Common myeloid progenitor, CD34-positive (primary cell): ENCODE measurements at regions of chr17 and their contacts with region 1.

Region 1: DNA sequence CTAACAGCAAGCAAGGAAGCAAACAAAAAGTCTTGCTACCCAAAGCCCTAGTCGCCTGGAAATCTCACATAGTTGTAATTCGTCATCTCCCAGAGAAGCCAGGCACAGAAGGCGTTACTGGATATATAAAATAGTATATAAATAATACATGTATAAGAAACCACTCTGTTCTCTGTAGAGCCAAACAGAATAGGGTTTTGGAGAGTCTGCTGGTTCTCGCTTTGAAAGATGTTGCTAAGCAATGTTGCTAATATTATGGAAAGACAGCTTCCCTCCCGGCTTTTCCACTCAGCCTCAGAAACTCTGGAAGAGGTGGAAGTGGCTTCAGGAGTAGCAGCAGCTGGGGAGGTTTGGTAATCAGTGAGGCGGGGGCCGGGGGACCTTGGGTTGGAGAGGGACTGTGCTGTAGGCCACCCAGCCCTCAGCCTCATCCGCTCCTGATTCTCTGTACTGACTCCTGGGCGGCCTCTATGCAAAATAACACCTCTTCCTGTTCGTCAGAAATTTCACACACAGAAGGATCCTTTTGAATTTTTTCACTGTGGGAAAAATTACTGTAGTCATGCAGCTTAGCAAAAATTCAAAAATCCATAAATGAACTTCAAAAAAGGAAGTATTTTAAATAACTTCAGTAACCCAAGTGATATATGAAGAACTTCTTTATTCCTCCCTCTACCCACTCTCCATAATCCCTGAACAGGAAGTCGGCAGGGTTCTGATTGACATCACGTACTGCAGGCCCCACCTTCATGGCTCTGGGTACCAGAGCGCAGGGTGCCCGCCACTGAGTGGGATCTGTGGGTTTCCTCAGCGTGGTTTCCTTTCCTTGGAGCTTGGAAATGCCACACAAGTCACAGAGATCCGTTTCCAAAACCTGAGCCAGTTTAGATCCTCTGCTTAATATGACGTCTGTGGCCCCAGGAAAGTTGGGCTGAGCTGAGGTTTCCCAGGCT is 51.4 kb downstream of the RAP1GAP2 start:
- DNase-seq: peak; percentile 57 to 79 (median 73)
- H3K4me3 ChIP-seq: peak overlapping the region in 2 of 7 experiments; percentile 25 to 30
- H3K27ac ChIP-seq: no peak overlapping the region
- H3K4me1 ChIP-seq: peaks cover 2 to 43% (median 37%) of the 10 kb centered on the region in 4 experiments
- H3K27me3 ChIP-seq: no peaks in the 10 kb centered on the region

Region 2: GRCh38 chr17:2701996-2702741 is 145.5 kb before region 1 on chr17:
- CTCF ChIA-PET with region 1: no interaction called
- POLR2A ChIA-PET with region 1: no interaction called
- DNase-seq: no peak
- H3K4me3 ChIP-seq: no peak overlapping the region
- H3K27ac ChIP-seq: no peak overlapping the region
- H3K4me1 ChIP-seq: no peaks in the 10 kb centered on the region
- H3K27me3 ChIP-seq: no peaks in the 10 kb centered on the region

Region 3: DNA sequence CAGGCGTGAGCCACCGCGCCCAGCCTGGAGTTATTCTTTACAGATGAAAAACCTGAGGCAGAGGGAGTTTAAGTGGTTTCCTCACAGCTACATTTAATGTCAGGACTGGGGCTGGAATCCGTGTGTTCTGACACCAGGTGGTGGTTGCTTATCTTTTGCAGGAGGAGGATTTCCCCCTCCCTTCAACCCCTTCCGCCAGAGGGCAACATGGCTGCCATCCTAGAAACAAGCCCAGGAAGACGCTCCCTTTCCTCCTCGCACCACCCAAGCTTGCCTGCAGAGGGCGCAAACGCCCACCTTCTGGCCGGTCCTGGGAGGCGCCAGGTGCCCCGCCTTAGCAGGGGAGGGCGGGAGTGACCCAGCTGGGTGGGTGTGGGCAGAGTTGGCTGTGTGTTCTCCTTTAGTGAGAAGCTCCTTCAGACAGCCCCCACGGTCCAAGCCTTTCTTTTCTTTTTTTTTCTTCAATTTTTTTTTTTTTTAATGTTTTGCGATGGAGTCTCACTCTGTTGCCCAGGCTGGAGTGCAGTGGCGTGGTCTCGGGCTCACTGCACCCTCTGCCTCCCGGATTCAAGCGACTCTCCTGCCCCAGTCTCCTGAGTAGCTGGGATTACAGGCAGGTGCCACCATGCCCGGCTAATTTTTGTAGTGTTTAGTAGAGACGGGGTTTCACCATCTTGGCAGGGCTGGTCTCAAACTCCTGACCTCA is 61.3 kb before region 1 on chr17:
- CTCF ChIA-PET with region 1: interaction called, 14 read pairs
- POLR2A ChIA-PET with region 1: no interaction called
- DNase-seq: peak; percentile 95 to 96 (median 96)
- H3K4me3 ChIP-seq: peak overlapping the region in 1 of 7 experiments; percentile 41
- H3K27ac ChIP-seq: no peak overlapping the region
- H3K4me1 ChIP-seq: peaks cover 2 to 66% (median 40%) of the 10 kb centered on the region in 4 experiments
- H3K27me3 ChIP-seq: no peaks in the 10 kb centered on the region

Region 4: GRCh38 chr17:2837147-2837561 is 10.5 kb before region 1 on chr17:
- CTCF ChIA-PET with region 1: interaction called, 24 read pairs
- POLR2A ChIA-PET with region 1: interaction called, 3 read pairs
- DNase-seq: peak in 2 of 3 donors; percentile 53 to 54
- H3K4me3 ChIP-seq: no peak overlapping the region
- H3K27ac ChIP-seq: no peak overlapping the region
- H3K4me1 ChIP-seq: peaks cover 0 to 10% (median 1%) of the 10 kb centered on the region in 4 experiments
- H3K27me3 ChIP-seq: no peaks in the 10 kb centered on the region

Region 5: DNA sequence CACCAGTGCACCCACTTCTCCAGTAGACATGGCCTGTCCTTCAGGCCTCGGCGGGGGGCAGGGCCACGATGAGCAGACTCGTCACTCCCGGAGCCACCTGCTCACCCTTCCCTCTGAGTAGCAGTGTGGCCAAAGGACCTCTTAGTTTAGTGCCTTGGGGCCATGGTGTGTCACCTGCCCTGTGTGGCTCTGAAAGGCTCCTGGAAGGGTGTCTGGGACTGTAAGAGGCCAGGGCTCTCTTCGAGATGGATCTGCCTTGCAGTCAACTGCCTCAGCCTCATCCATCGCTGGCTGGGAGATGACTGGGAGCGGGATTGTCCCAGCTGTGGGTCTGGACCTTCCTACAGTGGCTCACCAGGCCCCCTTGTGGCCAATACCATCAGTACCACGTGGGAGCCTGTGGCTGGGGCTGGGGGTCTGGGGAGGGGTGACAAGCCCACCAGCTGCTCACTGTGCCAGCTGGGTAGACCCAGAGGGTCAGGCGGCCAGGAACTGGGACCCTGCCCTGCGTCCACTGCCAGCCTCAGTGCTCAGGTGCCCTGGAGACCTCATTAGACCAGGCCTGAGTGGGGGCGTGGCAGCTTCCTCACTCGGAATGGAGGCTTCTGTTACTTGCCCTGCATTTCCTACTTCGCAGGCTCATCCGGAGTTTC is 82.3 kb after region 1 on chr17:
- CTCF ChIA-PET with region 1: interaction called, 23 read pairs
- POLR2A ChIA-PET with region 1: no interaction called
- DNase-seq: peak; percentile 21 to 35 (median 21)
- H3K4me3 ChIP-seq: no peak overlapping the region
- H3K27ac ChIP-seq: no peak overlapping the region
- H3K4me1 ChIP-seq: peaks cover 0 to 27% (median 15%) of the 10 kb centered on the region in 4 experiments
- H3K27me3 ChIP-seq: no peaks in the 10 kb centered on the region

Region 6: GRCh38 chr17:3012926-3013581 is 165.4 kb after region 1 on chr17:
- CTCF ChIA-PET with region 1: interaction called, 34 read pairs
- POLR2A ChIA-PET with region 1: no interaction called
- DNase-seq: peak; percentile 55 to 73 (median 67)
- H3K4me3 ChIP-seq: no peak overlapping the region
- H3K27ac ChIP-seq: no peak overlapping the region
- H3K4me1 ChIP-seq: no peaks in the 10 kb centered on the region
- H3K27me3 ChIP-seq: no peaks in the 10 kb centered on the region